AG04450 (cell line): ENCODE measurements at regions of chr2 and their contacts with region 1.

Region 1: DNA sequence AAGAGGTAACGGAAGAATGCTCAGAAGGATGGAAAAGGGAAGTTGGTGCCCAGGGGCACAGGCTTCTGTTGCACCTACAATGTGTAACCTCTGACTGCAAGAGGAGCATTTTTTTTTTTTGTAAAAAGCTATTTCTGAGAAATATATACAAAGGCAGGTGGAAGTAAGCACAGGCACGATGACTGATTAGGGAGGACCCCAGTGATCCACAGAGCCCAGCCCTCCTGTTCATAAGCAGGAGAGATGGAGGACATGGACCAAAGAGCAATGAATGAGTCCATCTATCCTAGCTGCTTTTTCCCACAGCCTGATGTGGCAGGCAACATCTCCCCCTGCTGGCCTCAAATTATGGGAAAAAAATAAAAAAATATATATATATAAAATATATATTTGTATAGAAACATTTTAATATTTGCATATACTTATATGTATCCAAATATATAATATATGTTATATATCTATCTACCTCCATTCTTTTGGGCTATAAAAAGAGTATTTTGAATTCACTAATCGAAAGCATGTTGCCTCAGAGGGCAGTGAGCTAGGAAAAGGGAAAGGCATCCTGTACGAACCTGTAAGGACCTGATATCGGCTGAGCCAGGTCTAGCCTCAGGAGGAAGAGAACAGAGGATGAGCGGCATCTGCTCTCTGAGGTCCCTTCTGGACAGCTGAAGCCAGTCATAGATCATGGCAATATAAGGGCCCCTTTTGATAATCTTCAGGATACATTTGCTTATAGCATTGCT is 166.0 kb upstream of the STK17B start:
- DNase-seq: no peak
- H3K4me3 ChIP-seq: no peak overlapping the region
- H3K27ac ChIP-seq: no peak overlapping the region
- H3K27me3 ChIP-seq: no peaks in the 10 kb centered on the region
- CTCF ChIP-seq: peak; percentile 60

Region 2: GRCh38 chr2:196076778-196077568 is 260.4 kb before region 1 on chr2:
- CTCF ChIA-PET with region 1: interaction called, 144 read pairs
- POLR2A ChIA-PET with region 1: interaction called, 6 read pairs
- DNase-seq: no peak
- H3K4me3 ChIP-seq: no peak overlapping the region
- H3K27ac ChIP-seq: no peak overlapping the region
- H3K27me3 ChIP-seq: no peaks in the 10 kb centered on the region
- CTCF ChIP-seq: no peak

Region 3: GRCh38 chr2:196166876-196167275 is 170.5 kb before region 1 on chr2:
- CTCF ChIA-PET with region 1: interaction called, 10 read pairs
- POLR2A ChIA-PET with region 1: no interaction called
- DNase-seq: peak; percentile 51
- H3K4me3 ChIP-seq: peak overlapping the region; percentile 87
- H3K27ac ChIP-seq: peak overlapping the region; percentile 68
- H3K27me3 ChIP-seq: no peaks in the 10 kb centered on the region
- CTCF ChIP-seq: no peak

Region 4: DNA sequence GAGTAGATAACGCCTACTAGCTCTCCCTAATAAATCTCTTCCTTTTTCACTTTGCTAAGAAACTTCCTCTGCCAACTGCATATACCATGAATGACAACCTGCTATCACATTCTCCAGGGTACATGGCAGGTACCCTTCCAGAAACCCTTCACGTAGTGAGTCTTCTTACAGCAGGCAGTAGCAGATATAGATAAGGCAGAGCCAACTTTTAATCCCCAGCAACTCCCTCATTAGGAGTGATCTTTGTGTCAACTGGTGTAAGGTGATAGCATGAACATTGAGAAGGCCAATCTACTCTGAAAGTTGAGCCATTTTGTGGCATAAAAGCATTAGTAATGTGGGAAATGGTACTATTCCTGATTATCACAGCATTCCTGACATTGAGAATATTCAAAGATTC is 160.3 kb before region 1 on chr2:
- CTCF ChIA-PET with region 1: no interaction called
- POLR2A ChIA-PET with region 1: no interaction called
- DNase-seq: no peak
- H3K4me3 ChIP-seq: no peak overlapping the region
- H3K27ac ChIP-seq: no peak overlapping the region
- H3K27me3 ChIP-seq: no peaks in the 10 kb centered on the region
- CTCF ChIP-seq: no peak

Region 5: GRCh38 chr2:196309691-196310090 is 27.7 kb before region 1 on chr2:
- CTCF ChIA-PET with region 1: interaction called, 15 read pairs
- POLR2A ChIA-PET with region 1: no interaction called
- DNase-seq: no peak
- H3K4me3 ChIP-seq: no peak overlapping the region
- H3K27ac ChIP-seq: no peak overlapping the region
- H3K27me3 ChIP-seq: no peaks in the 10 kb centered on the region
- CTCF ChIP-seq: no peak

Region 6: GRCh38 chr2:196356332-196356731 is 19.0 kb after region 1 on chr2:
- CTCF ChIA-PET with region 1: interaction called, 18 read pairs
- POLR2A ChIA-PET with region 1: no interaction called
- DNase-seq: no peak
- H3K4me3 ChIP-seq: no peak overlapping the region
- H3K27ac ChIP-seq: no peak overlapping the region
- H3K27me3 ChIP-seq: no peaks in the 10 kb centered on the region
- CTCF ChIP-seq: no peak

Region 7: DNA sequence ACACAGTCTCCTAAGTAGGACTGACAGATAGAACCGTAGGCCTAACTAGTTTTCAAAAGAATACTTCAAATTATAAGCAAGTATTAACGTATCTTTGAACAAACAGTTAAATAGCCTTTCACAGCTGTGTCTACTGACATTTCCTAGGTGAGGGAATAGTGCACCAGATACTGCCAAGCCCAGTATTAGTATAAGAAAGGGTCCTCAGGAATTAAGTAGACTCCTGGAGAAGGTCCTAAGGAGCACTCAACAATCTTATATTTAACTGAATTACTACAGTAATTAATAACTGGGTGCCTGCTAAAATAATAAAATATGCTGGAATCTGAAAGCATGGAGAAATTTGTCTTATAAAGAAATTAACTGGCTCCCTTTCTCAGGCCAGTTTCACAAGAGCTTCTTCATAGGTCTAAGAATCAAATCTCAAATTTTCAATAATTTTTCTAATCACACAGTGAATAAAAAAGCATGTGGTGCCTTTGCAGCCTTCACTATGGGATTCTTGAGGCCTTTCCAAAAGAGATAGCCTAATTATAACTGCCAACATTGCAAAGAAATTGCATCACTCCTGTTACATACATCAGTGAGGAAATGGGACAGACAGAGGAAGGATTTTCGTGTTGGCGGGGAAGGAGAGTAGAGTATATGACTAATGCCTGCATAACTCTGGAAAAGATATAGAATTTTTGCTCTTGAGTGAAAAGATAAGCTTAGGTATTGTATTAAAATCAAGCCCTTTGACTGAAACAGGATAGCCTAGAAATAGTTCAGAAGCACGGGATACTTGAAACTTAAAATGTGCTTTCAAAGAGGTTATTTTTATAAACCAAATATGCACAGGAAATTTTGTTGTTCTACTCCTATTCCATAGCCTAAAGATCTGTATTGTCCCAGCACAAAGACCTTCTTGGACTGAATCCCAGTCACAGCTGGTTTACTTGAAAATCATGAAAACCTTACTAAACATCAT is 62.6 kb after region 1 on chr2:
- CTCF ChIA-PET with region 1: interaction called, 10 read pairs
- POLR2A ChIA-PET with region 1: interaction called, 3 read pairs
- DNase-seq: peak; percentile 83
- H3K4me3 ChIP-seq: no peak overlapping the region
- H3K27ac ChIP-seq: no peak overlapping the region
- H3K27me3 ChIP-seq: no peaks in the 10 kb centered on the region
- CTCF ChIP-seq: no peak